PC-3 (cell line): ENCODE measurements at regions of chr16 and their contacts with region 1.

Region 1: DNA sequence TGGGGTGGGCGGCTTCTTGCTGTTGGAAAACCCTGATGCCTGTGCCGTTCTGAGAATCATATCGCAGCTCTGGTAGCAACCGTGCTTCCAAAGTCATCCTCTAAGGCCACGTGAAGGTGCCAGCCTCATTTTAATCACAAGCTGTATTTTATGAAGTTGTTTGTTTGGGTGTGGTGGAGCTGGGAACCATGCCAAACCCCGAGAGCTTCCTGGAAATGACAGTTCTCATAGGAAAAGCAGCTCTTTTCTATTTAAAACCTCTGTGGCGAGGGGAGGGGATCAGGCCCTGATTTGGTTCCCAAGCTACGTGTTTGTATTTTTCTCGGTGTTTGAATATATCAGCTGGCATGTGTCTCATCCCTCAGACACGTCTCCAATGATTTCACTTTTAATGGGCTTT is 21.7 kb downstream of the KNOP1 start:
- DNase-seq: peak; percentile 83
- ATAC-seq: peak; percentile 68
- H3K4me3 ChIP-seq: no peak overlapping the region
- H3K27ac ChIP-seq: peak overlapping the region; percentile 69
- H3K4me1 ChIP-seq: peaks cover 45% of the 10 kb centered on the region
- H3K27me3 ChIP-seq: no peaks in the 10 kb centered on the region
- CTCF ChIP-seq: no peak

Region 2: DNA sequence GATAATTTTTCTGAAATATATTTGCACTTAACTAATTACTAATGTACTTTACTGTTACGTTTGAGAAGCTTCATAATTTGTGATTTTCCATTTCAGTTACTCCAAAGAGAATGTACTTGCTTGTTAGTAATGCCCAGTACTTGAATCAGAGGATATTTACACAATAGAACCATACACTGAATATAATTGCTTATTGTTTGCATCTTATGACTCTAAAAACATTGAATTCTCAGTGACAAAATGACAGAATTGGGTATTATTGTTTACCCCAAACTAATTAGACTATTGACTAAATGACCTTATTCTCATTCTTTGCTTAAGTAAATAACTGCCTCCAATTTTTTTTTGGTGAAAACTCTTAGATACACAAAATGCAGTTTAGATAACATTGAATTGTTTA is 163.7 kb before region 1 on chr16:
- CTCF ChIA-PET with region 1: no interaction called
- POLR2A ChIA-PET with region 1: no interaction called
- intact Hi-C with region 1: no loop called
- DNase-seq: no peak
- ATAC-seq: no peak
- H3K4me3 ChIP-seq: no peak overlapping the region
- H3K27ac ChIP-seq: no peak overlapping the region
- H3K4me1 ChIP-seq: no peaks in the 10 kb centered on the region
- H3K27me3 ChIP-seq: no peaks in the 10 kb centered on the region
- CTCF ChIP-seq: no peak

Region 3: GRCh38 chr16:19607616-19608280 is 88.6 kb before region 1 on chr16:
- CTCF ChIA-PET with region 1: no interaction called
- POLR2A ChIA-PET with region 1: no interaction called
- intact Hi-C with region 1: loop called (anchors 5 kb)
- DNase-seq: peak; percentile 87
- ATAC-seq: peak; percentile 93
- H3K4me3 ChIP-seq: no peak overlapping the region
- H3K27ac ChIP-seq: peak overlapping the region; percentile 45
- H3K4me1 ChIP-seq: peaks cover 35% of the 10 kb centered on the region
- H3K27me3 ChIP-seq: no peaks in the 10 kb centered on the region
- CTCF ChIP-seq: no peak

Region 4: DNA sequence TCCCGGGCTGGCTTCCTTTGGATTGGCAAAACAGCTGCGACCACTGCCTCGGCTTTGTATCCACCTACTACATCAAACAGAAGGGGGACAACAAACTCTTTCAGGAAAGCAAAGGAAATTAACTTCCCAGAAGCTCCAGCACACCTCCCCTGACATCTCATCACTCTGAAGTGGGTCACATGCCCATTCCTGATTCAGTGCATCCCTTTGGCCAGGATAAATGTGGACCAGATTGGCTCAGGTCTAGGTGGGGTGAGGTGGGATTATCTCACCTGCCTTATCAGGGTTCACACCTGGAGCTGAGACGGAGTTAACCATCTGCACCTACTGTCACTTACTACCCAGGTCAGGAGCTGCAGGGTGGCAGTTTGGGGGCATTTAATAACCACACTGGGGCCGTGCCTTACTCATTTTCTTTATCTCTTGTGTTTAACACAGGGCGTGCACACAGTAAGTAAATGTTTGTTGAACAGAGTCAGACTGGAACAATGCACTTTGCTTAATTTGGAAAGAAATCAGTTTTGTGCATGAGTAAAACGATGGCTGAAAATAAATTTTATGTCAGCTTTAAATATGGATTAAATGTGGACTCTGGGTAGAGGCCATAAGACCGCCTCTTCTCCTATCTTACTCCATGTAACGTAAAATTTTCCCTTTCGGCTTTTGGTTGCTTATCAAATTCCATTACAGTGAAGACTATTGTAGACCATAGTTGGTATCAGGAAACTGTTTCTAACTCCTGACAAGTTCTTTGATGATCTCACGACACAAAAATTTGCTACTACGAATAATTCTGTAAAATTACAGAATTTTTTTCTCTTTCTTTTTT is 57.7 kb after region 1 on chr16:
- CTCF ChIA-PET with region 1: no interaction called
- POLR2A ChIA-PET with region 1: no interaction called
- intact Hi-C with region 1: loop called (anchors 5 kb)
- DNase-seq: peak; percentile 74
- ATAC-seq: peak; percentile 93
- H3K4me3 ChIP-seq: peak overlapping the region; percentile 36; the same call in 1 of the 2 replicates
- H3K27ac ChIP-seq: peak overlapping the region; percentile 60
- H3K4me1 ChIP-seq: peaks cover 28% of the 10 kb centered on the region
- H3K27me3 ChIP-seq: no peaks in the 10 kb centered on the region
- CTCF ChIP-seq: no peak

Region 5: DNA sequence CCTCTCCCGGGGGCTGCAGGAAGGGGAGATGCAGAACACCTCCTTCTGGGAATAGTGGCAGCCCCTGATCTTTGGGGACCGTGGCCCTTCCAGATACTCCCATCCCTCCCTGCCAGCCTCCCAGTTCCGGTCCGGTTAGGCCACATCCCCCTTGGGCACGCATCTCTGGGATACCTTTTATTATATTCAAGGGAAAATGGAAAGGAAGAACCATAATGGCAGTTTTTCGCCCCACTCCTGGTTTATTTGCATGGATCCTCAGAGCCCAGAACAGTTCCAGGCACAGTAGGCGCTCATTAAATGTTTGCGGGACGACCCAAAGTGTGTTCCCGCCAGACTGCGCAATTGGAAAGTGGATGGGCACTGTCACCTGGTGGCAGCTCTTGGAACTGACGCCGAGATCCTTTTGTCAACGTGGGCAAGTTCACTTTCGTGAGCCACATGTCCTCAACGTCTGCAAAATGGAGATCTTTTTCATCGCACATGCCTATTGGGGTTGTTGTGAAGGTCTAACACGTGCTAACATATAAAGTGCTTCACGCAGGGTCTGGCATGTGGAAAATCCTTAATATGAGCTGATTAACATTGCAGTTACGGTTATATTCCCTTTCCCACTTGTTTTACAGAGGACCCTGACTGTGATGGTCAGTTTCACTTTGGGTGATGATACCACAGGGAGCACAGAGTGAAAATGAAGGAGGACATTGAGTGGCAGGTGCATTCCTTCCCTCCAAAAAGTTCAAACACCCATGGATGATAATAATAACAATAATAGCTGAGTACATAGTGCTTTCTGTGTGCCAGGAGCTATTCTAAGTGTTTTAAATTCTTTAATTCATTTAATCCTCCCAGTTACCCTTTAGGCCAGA is 190.0 kb after region 1 on chr16:
- CTCF ChIA-PET with region 1: interaction called, 4 read pairs
- POLR2A ChIA-PET with region 1: no interaction called
- intact Hi-C with region 1: loop called (anchors 5 kb)
- DNase-seq: peak; percentile 83
- ATAC-seq: peak; percentile 36
- H3K4me3 ChIP-seq: no peak overlapping the region
- H3K27ac ChIP-seq: no peak overlapping the region
- H3K4me1 ChIP-seq: peaks cover 4% of the 10 kb centered on the region; the same call in 1 of the 2 replicates
- H3K27me3 ChIP-seq: no peaks in the 10 kb centered on the region
- CTCF ChIP-seq: peak; percentile 95